Activated CD4-positive, alpha-beta memory T cell treated with anti-CD3 and anti-CD28 coated beads, Interleukin-2, amount 10 ng/mL, durations not matched to agents 7 days and 5 days (primary cell): ENCODE measurements at regions of chr5 and their contacts with region 1.

Region 1: DNA sequence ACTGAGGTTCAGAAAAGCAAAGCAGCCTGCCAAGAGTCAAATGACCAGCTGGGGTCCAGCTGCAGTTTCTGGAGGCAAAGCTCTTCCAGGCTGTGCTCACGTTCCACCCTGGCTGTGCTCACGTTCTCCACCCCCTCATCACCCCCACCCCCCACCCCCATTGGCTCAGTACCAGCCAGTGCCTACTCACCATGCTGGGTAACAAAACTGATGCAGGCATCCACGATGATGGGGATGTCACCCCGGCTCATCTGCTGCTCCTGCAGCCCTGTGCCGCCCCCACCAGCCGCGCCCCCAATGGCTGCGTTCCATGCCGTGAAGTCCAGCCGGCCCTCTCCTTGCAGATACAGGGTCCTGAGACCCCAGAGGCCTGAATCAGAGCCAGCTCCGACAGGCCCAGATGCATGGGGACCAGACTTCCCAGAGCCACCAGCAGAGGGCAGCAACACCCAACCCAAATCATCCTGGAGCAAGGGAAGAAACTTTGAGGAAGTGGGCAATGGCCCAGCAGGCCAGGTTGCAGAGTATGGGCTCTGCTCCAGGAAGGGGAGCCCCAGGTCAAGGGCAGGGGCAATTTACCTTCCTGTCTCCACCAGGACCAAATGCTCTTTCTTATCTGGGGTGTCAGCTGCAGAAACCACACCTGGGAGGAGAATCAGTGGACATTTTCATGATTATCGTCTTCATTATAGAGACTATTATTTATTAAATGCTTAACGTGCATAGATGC is 13.7 kb upstream of the FCHSD1 start:
- DNase-seq: peak; percentile 80
- H3K4me3 Mint-ChIP-seq: no peak overlapping the region
- H3K27ac Mint-ChIP-seq: no peak overlapping the region
- H3K4me1 Mint-ChIP-seq: peaks cover 5% of the 10 kb centered on the region
- H3K27me3 Mint-ChIP-seq: no peaks in the 10 kb centered on the region

Region 2: DNA sequence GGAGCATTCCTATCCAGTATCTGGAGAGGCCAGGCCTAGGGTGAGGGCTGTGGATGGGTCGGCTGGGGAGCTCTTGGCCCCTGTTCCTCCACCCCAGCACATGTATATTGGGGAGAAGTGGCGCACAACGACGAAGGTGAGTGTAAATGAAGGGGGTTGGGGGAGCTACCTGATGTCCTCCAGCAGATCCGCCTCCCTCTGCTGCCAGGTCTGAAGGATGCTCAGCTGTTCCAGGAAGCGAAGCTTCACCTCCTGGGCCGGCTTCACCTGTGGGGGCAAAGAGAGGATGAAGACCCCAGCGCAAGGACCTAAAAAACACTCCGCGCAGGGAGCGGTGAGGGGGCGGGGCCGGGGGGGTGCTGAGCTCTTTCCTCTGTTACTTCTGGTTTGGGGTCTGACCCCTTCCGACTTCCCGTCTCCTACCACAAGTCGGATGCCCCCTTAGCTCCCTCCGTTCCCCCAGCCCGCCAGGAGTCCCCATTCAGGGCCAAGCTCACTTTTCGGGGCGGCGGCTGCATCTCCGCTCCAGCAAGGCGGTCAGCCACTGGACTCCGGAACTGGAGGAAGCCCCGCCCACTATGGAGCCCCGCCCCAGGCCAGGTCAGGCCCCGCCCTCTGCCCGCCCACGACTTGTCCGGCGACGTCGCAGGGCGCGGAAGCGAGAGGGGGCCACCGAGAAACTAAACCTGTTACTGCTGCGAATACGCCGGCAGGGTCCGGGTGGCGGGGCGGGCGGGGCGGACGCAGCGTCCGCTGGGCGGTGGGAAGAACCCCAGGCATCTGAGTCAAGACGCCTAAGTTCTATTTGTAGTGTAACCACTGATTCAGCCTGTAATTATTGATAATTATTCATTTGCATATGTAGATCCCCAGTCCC is 13.8 kb before region 1 on chr5 and contains the start of gene FCHSD1:
- CTCF ChIA-PET with region 1: interaction called, 21 read pairs
- POLR2A ChIA-PET with region 1: interaction called, 8 read pairs
- DNase-seq: peak; percentile 89
- H3K4me3 Mint-ChIP-seq: peak within 1 kb of the TSS; percentile 98
- H3K27ac Mint-ChIP-seq: peak within 1 kb of the TSS; percentile 89
- H3K4me1 Mint-ChIP-seq: peaks cover 32% of the 10 kb centered on the region
- H3K27me3 Mint-ChIP-seq: no peaks in the 10 kb centered on the region
- total RNA-seq, gene FCHSD1: 69.8 to 71.8 TPM

Region 3: DNA sequence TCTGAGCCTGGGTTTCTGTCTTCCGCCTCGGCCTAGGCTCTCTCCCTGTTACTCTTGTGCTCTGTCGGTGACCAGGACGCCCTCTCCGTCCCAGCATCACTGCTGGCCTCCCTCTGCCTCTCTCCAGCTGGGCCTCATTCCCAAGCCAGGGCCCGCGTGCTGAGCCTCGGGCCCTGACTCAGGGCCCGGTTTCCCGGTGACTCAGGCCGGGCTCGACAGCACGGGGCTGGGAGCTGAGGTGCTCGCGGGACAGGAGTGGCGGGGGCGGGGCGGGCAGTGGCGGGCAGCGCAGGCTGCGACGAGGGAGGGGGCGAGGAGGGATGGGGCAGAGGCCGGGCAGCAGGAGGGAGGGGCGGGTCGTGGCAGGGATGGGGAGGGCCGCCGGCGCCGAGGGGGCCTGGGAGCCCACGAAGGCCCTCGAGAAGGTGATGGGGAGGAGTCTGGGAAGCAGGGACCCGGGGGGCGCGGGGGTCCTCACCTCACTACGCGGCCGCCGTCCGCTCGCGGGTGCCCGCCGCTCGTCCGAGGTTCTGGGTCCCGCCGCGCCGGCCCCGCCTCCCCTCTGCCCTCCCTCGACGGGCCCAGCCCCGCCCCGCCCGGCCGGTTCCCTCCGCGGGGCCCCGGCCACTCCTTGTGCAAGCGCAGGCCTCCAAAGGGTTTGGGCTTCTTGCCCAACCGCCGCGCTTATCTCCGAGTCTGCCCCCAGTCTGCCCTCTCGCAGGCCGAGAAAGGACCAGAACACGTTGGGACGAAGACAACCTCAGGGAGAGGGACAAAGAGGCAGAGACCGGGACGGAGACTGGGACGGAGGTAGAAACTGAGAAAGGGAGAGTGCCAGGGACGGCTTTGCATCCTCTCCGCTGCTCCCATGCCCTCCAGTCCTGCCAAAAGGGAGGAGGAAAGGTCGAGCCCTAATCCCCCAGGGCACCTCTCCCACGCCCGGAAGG is 17.1 kb after region 1 on chr5 and contains the start of gene ARAP3:
- CTCF ChIA-PET with region 1: interaction called, 4 read pairs
- POLR2A ChIA-PET with region 1: interaction called, 13 read pairs
- DNase-seq: peak; percentile 54
- H3K4me3 Mint-ChIP-seq: peak within 1 kb of the TSS; percentile 79
- H3K27ac Mint-ChIP-seq: peak within 1 kb of the TSS; percentile 70
- H3K4me1 Mint-ChIP-seq: peaks cover 41% of the 10 kb centered on the region
- H3K27me3 Mint-ChIP-seq: peaks cover 5% of the 10 kb centered on the region
- total RNA-seq, gene ARAP3: 13.6 to 13.9 TPM